ENCODE measurements at regions of chr7 and their contacts with region 1.

Region 1: GRCh38 chr7:47968847-47969774 is 10.3 kb downstream of the HUS1 start:
- DNase-seq: peak; percentile 75 to 82
- ATAC-seq: peak; percentile 81 to 96
- H3K4me3 ChIP-seq: no peak overlapping the region
- H3K27ac ChIP-seq: no peak overlapping the region
- H3K4me1 ChIP-seq: no peaks in the 10 kb centered on the region
- CTCF ChIP-seq: peak; percentile 79
- EP300 ChIP-seq: no peak
- POLR2A ChIP-seq: no peak
- RAD21 ChIP-seq: peak; percentile 73 to 83

Region 2: GRCh38 chr7:47979145-47979831 is 10.2 kb after region 1 on chr7 and contains the start of gene HUS1:
- CTCF ChIA-PET with region 1: interaction called, 10 read pairs
- POLR2A ChIA-PET with region 1: no interaction called
- DNase-seq: peak; percentile 90 to 93
- ATAC-seq: peak; percentile 99
- H3K4me3 ChIP-seq: peak within 1 kb of the TSS; percentile 83
- H3K27ac ChIP-seq: peak within 1 kb of the TSS; percentile 81 to 93
- H3K4me1 ChIP-seq: peaks cover 6% of the 10 kb centered on the region; the same call in 2 of the 3 replicates
- CTCF ChIP-seq: no peak
- EP300 ChIP-seq: no peak
- POLR2A ChIP-seq: peak; percentile 76
- RAD21 ChIP-seq: peak in 1 of 2 experiments; percentile 27; a peak in 1 of 5 replicates
- polyA plus RNA-seq, gene HUS1: 34.7 and 39.8 TPM in 2 replicates

Region 3: DNA sequence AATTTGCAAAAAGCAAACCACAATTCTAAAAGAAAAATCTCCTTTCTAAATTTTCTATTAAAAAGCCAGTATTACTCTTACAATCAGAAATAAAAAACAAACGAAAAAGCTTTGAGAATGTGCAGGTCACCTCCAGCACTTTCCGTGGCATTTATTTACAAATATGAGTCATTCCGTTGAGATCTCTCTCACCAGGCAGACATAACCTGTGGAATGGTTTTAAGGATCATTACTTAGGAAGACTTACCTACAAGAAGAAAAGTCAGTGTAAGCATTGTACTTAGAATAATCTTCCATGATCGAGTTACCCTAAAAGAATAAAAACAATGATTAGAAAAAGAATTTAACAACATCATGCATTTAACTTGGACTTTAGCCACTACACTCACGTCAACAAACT is 56.5 kb after region 1 on chr7:
- CTCF ChIA-PET with region 1: no interaction called
- POLR2A ChIA-PET with region 1: no interaction called
- DNase-seq: peak in 1 of 2 experiments; percentile 18
- ATAC-seq: 0 out of 6 replicates have a peak, but pooled peaks of 1 of the 2 experiments have one; percentile 46
- H3K4me3 ChIP-seq: no peak overlapping the region
- H3K27ac ChIP-seq: no peak overlapping the region
- H3K4me1 ChIP-seq: peaks cover 13% of the 10 kb centered on the region
- CTCF ChIP-seq: no peak
- EP300 ChIP-seq: no peak
- POLR2A ChIP-seq: no peak
- RAD21 ChIP-seq: no peak

Measured in A549 (cell line).